Tibial artery (tissue), 4 donors: ENCODE measurements at regions of chr18 and their contacts with region 1.

Region 1: DNA sequence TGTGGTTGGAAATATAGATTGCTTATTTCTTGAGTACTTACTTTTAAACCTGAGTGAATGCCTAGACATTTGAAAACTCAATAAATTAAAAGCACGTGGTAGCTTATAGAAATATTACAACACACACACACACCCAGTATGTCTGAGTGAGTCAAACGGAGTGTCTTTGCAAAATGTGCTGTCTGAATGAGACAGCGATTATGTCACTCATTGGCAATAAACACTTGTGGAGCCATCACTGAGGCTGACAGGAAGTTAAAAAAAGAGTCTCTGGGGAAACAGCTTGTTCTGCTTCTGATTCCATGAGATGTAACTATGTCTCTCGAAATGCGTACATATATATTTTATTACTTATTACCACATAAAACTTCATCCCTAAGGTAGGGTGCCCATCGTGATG is 22.3 kb upstream of the VPS4B start:
- DNase-seq: peak in 1 of 2 donors; percentile 30
- H3K4me3 ChIP-seq: no peak overlapping the region
- H3K27ac ChIP-seq: peak overlapping the region in 1 of 2 donors; percentile 22
- H3K4me1 ChIP-seq: no peaks in the 10 kb centered on the region
- H3K27me3 ChIP-seq: no peaks in the 10 kb centered on the region
- CTCF ChIP-seq: no peak

Region 2: GRCh38 chr18:63016270-63016669 is 428.3 kb before region 1 on chr18:
- intact Hi-C with region 1: loop called (anchors 5 kb)
- DNase-seq: no peak
- H3K4me3 ChIP-seq: no peak overlapping the region
- H3K27ac ChIP-seq: no peak overlapping the region
- H3K4me1 ChIP-seq: no peaks in the 10 kb centered on the region
- H3K27me3 ChIP-seq: peaks cover 0 to 16% of the 10 kb centered on the region in 2 donors
- CTCF ChIP-seq: peak; percentile 77 to 80

Region 3: GRCh38 chr18:63119647-63120046 is 324.9 kb before region 1 on chr18:
- intact Hi-C with region 1: loop called (anchors 10 kb)
- DNase-seq: no peak
- H3K4me3 ChIP-seq: no peak overlapping the region
- H3K27ac ChIP-seq: no peak overlapping the region
- H3K4me1 ChIP-seq: peaks cover 0 to 17% (median 8%) of the 10 kb centered on the region in 4 donors
- H3K27me3 ChIP-seq: no peaks in the 10 kb centered on the region
- CTCF ChIP-seq: peak; percentile 43